ENCODE measurements at regions of chr1 and their contacts with region 1.

Region 1: GRCh38 chr1:36650200-36651065 is 167.7 kb upstream of the CSF3R start:
- DNase-seq: peak; percentile 73
- H3K4me3 ChIP-seq: no peak overlapping the region; a peak in 1 of 4 replicates
- H3K27ac ChIP-seq: no peak overlapping the region
- H3K4me1 ChIP-seq: no peaks in the 10 kb centered on the region
- H3K27me3 ChIP-seq: no peaks in the 10 kb centered on the region
- CTCF ChIP-seq: peak; percentile 86
- EP300 ChIP-seq: no peak
- RAD21 ChIP-seq: peak; percentile 64

Region 2: GRCh38 chr1:36638268-36638667 is 12.2 kb before region 1 on chr1:
- CTCF ChIA-PET with region 1: interaction called, 31 read pairs
- POLR2A ChIA-PET with region 1: no interaction called
- DNase-seq: no peak
- H3K4me3 ChIP-seq: no peak overlapping the region
- H3K27ac ChIP-seq: no peak overlapping the region
- H3K4me1 ChIP-seq: peaks cover 0 to 3% of the 10 kb centered on the region in 2 experiments; a peak in 1 of 4 replicates
- H3K27me3 ChIP-seq: no peaks in the 10 kb centered on the region
- CTCF ChIP-seq: no peak
- EP300 ChIP-seq: no peak
- RAD21 ChIP-seq: no peak

Region 3: DNA sequence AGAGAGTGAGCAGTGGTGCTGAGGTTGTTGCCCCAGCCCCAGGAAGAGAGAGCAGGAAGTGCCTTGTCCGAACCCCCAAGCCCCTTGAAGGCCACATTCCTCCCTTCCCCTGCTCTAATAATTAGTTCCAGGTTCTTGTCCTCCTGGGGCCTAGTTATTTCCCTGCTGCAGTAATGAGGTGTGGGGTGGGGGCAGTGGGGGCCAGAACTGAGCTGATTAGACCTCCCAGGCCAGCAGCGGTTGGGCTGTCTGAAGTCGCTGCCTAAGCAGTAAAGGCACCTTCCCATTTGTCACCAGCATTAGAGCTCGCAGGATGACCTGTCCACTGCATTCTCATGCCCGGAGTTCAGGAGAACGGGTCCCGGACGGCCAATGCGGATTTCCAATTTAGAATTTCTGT is 18.8 kb after region 1 on chr1:
- CTCF ChIA-PET with region 1: interaction called, 25 read pairs
- POLR2A ChIA-PET with region 1: no interaction called
- DNase-seq: no peak
- H3K4me3 ChIP-seq: no peak overlapping the region
- H3K27ac ChIP-seq: no peak overlapping the region
- H3K4me1 ChIP-seq: no peaks in the 10 kb centered on the region
- H3K27me3 ChIP-seq: no peaks in the 10 kb centered on the region
- CTCF ChIP-seq: no peak
- EP300 ChIP-seq: no peak
- RAD21 ChIP-seq: no peak

Measured in SK-N-SH (cell line).